A549 (cell line): ENCODE measurements at regions of chr15 and their contacts with region 1.

Region 1: DNA sequence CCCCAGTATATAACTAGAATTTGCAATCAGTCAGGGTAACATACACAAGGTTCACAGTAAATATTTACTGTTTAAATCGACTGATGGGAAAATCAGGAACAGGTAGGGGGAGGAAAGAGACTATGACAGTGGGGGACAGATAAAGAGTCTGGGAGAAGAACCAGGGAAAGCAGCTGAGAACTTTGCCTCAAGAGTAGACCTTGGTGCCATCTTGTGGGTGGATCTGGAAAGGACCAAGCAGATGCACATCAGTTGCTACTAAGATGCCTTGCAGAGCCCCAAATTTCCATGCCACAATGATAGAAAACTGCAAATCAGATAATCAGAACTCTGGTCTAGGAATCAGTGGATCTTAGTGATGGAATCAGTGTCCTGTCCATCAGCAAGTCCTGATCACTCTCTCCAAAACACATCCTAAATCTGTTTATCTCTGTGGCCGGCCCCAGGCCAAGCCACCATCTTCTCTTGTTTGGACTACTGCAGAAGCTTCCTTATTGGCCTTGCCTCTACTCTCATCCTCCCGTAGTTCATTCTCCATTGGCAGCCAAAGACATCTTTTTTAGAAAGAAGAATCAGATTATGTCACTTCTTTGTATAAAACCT is 62.7 kb downstream of the PDE8A start:
- DNase-seq: peak; percentile 42 to 89
- ATAC-seq: peak; percentile 52 to 65; a peak in 4 of 6 replicates
- H3K4me3 ChIP-seq: no peak overlapping the region
- H3K27ac ChIP-seq: peak overlapping the region; percentile 90 to 95
- H3K4me1 ChIP-seq: peaks cover 81% of the 10 kb centered on the region
- CTCF ChIP-seq: peak; percentile 88
- EP300 ChIP-seq: no peak
- POLR2A ChIP-seq: no peak
- RAD21 ChIP-seq: peak; percentile 90

Region 2: GRCh38 chr15:84588053-84588874 is 456.1 kb before region 1 on chr15:
- CTCF ChIA-PET with region 1: interaction called, 26 read pairs
- POLR2A ChIA-PET with region 1: no interaction called
- DNase-seq: peak; percentile 93 to 98
- ATAC-seq: peak; percentile 99 to 100
- H3K4me3 ChIP-seq: peak overlapping the region; percentile 33
- H3K27ac ChIP-seq: peak overlapping the region; percentile 66 to 82
- H3K4me1 ChIP-seq: peaks cover 9% of the 10 kb centered on the region; the same call in 2 of the 3 replicates
- CTCF ChIP-seq: peak; percentile 97
- EP300 ChIP-seq: no peak
- POLR2A ChIP-seq: no peak
- RAD21 ChIP-seq: peak; percentile 90 to 99

Region 3: DNA sequence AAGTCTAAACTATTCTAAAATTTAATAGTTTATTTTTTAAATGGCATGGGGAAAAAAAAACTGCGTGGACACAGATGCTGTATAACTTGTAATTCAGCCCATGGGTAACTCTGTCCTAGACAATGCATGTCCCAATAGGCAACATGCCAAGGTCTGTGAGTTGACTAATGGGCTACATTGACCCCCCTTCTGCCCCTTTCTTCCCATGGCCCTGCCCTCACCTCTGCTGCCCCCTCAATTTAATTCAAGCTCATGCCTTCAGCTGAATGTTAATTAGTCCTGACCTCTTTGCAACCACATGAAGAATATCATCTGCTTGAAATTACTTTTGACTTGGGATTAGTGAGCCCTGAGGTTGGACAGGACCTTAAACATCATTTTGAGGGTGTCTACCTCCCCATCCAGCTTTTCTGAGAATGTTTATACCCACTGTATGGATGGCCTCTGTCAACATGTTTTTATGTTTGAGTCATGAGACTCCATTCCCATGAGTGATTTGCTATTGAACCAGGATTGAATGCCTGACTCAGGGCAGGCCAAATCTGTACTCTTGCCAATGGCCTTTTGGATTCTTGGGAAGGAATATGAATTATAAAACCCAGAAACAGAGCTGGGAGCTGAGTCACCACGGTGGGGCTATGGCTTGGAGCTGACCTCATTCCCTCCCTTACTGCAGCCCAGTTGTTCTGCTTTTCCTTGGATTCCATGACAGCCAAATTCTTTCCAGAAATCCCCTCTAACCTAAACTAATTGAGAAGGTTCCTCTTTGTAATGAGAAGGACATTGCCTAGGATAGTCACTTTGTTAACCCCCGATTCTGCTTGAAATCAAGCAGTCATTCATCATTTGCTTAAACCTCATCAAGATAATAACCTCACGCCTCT is 96.2 kb before region 1 on chr15:
- CTCF ChIA-PET with region 1: interaction called, 132 read pairs
- POLR2A ChIA-PET with region 1: no interaction called
- DNase-seq: peak in 1 of 2 experiments; percentile 43
- ATAC-seq: peak; percentile 36 to 74; a peak in 4 of 6 replicates
- H3K4me3 ChIP-seq: no peak overlapping the region
- H3K27ac ChIP-seq: peak overlapping the region in 1 of 2 experiments; percentile 55; a peak in 3 of 6 replicates
- H3K4me1 ChIP-seq: peaks cover 15% of the 10 kb centered on the region; the same call in 2 of the 3 replicates
- CTCF ChIP-seq: no peak
- EP300 ChIP-seq: no peak
- POLR2A ChIP-seq: no peak
- RAD21 ChIP-seq: no peak

Region 4: GRCh38 chr15:84961114-84961452 is 83.3 kb before region 1 on chr15:
- CTCF ChIA-PET with region 1: interaction called, 42 read pairs
- POLR2A ChIA-PET with region 1: interaction called, 3 read pairs
- DNase-seq: no peak
- ATAC-seq: peak in 1 of 2 experiments; percentile 21; a peak in 1 of 6 replicates
- H3K4me3 ChIP-seq: no peak overlapping the region
- H3K27ac ChIP-seq: peak overlapping the region in 1 of 2 experiments; percentile 30; a peak in 2 of 6 replicates
- H3K4me1 ChIP-seq: peaks cover under 1% of the 10 kb centered on the region; the same call in 2 of the 3 replicates
- CTCF ChIP-seq: no peak
- EP300 ChIP-seq: no peak
- POLR2A ChIP-seq: no peak
- RAD21 ChIP-seq: no peak

Region 5: GRCh38 chr15:84981054-84981710 is 63.2 kb before region 1 on chr15:
- CTCF ChIA-PET with region 1: interaction called, 80 read pairs
- POLR2A ChIA-PET with region 1: interaction called, 50 read pairs
- DNase-seq: peak; percentile 99
- ATAC-seq: peak; percentile 75 to 84
- H3K4me3 ChIP-seq: peak overlapping the region; percentile 91
- H3K27ac ChIP-seq: peak overlapping the region; percentile 97 to 98
- H3K4me1 ChIP-seq: peaks cover 39% of the 10 kb centered on the region
- CTCF ChIP-seq: 0 out of 3 replicates have a peak, but pooled peaks have one; percentile 11
- EP300 ChIP-seq: peak; percentile 46 to 80; a peak in 3 of 5 replicates
- POLR2A ChIP-seq: peak; percentile 25
- RAD21 ChIP-seq: peak; percentile 36 to 51; a peak in 4 of 5 replicates

Region 6: GRCh38 chr15:85024509-85025214 is 19.7 kb before region 1 on chr15:
- CTCF ChIA-PET with region 1: interaction called, 77 read pairs
- POLR2A ChIA-PET with region 1: no interaction called
- DNase-seq: peak; percentile 41 to 51
- ATAC-seq: peak; percentile 55 to 67; a peak in 5 of 6 replicates
- H3K4me3 ChIP-seq: 0 out of 3 replicates have a peak overlapping the region, but pooled peaks have one; percentile 3
- H3K27ac ChIP-seq: peak overlapping the region; percentile 49 to 66
- H3K4me1 ChIP-seq: peaks cover 76% of the 10 kb centered on the region
- CTCF ChIP-seq: no peak
- EP300 ChIP-seq: no peak
- POLR2A ChIP-seq: no peak
- RAD21 ChIP-seq: no peak

Region 7: DNA sequence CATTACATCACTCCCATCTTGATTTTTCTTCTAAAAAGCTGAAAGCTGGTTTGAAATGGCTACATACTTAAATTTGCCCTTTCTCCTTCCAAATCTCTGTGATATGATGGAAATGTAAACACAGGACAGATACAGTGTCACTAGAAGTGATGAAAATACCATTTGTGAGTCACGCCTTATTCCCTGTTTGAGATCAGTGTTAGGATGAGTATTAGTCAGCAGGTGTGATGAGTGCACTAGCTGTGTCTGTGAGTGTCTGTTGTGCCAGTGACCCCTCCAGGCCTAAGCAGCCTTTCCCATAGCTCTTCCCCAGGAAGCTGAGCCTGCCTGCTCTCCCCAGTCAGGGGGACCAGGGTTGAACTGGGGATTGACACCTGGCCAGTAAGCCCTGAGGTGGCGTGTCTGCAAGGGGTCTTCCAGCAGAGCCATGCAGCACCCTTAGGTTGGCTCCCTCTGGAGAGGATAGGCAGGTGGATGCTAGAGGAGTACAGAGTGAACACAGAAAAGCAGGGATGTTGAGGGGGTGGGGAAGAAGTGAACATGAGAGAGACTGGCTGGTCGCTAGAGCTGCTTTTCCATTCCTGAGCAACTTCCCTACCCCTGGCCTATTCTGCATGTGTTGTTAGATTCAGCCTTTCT is 29.3 kb after region 1 on chr15:
- CTCF ChIA-PET with region 1: interaction called, 18 read pairs
- POLR2A ChIA-PET with region 1: interaction called, 6 read pairs
- DNase-seq: peak; percentile 70 to 75
- ATAC-seq: peak; percentile 82 to 93
- H3K4me3 ChIP-seq: no peak overlapping the region
- H3K27ac ChIP-seq: peak overlapping the region; percentile 65 to 68; a peak in 5 of 6 replicates
- H3K4me1 ChIP-seq: peaks cover 27% of the 10 kb centered on the region
- CTCF ChIP-seq: no peak
- EP300 ChIP-seq: no peak
- POLR2A ChIP-seq: no peak
- RAD21 ChIP-seq: no peak; a peak in 1 of 5 replicates

Region 8: GRCh38 chr15:85330901-85331588 is 286.7 kb after region 1 on chr15:
- CTCF ChIA-PET with region 1: no interaction called
- POLR2A ChIA-PET with region 1: no interaction called
- DNase-seq: peak; percentile 93 to 95
- ATAC-seq: peak; percentile 92 to 96
- H3K4me3 ChIP-seq: peak overlapping the region; percentile 44; the same call in 2 of the 3 replicates
- H3K27ac ChIP-seq: peak overlapping the region; percentile 78 to 85
- H3K4me1 ChIP-seq: peaks cover 26% of the 10 kb centered on the region
- CTCF ChIP-seq: peak; percentile 98
- EP300 ChIP-seq: no peak
- POLR2A ChIP-seq: no peak
- RAD21 ChIP-seq: peak; percentile 99 to 100